Posterior cingulate gyrus (tissue), 11 donors: ENCODE measurements at regions of chr1 and their contacts with region 1.

Region 1: DNA sequence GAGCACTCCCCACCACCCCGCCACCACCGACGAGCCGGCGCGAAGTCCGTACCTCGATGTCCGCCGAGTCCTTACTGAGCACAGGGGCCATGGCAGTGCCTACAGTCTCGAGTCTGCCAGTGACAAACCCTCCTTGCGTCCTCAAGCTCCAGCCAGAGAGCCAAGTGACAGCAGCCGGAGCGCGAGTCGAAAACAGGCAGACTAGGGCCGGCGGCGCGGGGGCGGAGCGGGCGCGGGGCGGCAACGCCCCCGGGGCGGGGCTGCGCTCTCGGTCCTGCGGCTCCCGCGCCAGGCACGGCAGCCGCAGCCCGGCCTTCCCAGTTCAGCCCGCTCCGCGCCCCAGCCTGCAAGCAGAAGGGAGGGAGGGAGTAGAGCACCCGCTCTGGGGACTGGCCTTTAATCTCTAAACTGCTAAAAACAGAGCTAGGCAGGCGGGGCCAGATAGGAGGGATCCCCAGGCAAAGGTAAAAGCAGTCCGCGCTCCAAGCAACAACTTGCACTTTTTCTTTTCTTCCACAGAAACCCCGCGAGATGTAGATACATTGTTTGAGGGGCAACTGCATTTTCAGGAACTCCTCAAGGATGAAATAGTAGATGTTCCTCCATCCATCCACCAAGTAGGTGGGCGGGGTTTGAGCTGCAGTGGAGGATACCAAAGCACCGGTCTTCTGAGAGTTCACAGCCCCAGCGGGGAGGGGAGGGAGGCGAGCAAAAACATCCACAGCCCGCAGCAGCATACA is at the start of gene DPYD:
- DNase-seq: peak; percentile 78 to 98 (median 88)

Region 2: GRCh38 chr1:97999320-97999719 is 78.3 kb after region 1 on chr1:
- intact Hi-C with region 1: no loop called
- DNase-seq: no peak

Region 3: GRCh38 chr1:98048244-98048643 is 127.2 kb after region 1 on chr1:
- intact Hi-C with region 1: loop called (anchors 10 kb)
- DNase-seq: peak; percentile 62 to 96 (median 79)